A673 (cell line): ENCODE measurements at regions of chr19 and their contacts with region 1.

Region 1: GRCh38 chr19:10100163-10100785 is 2.2 kb downstream of the ANGPTL6 start:
- DNase-seq: no peak
- H3K4me3 ChIP-seq: no peak overlapping the region
- H3K27ac ChIP-seq: no peak overlapping the region
- H3K4me1 ChIP-seq: peaks cover 4% of the 10 kb centered on the region
- H3K27me3 ChIP-seq: no peaks in the 10 kb centered on the region
- CTCF ChIP-seq: no peak

Region 2: GRCh38 chr19:10226376-10227025 is 126.2 kb after region 1 on chr19:
- CTCF ChIA-PET with region 1: interaction called, 18 read pairs
- POLR2A ChIA-PET with region 1: interaction called, 4 read pairs
- intact Hi-C with region 1: no loop called
- DNase-seq: no peak
- H3K4me3 ChIP-seq: no peak overlapping the region
- H3K27ac ChIP-seq: no peak overlapping the region
- H3K4me1 ChIP-seq: no peaks in the 10 kb centered on the region
- H3K27me3 ChIP-seq: no peaks in the 10 kb centered on the region
- CTCF ChIP-seq: no peak